ENCODE measurements at regions of chr17 and their contacts with region 1.

Region 1: GRCh38 chr17:76467366-76467765 is at the start of gene AANAT:
- DNase-seq: no peak
- H3K4me3 Mint-ChIP-seq: no peak within 1 kb of the TSS
- H3K27ac Mint-ChIP-seq: no peak within 1 kb of the TSS
- H3K4me1 Mint-ChIP-seq: peaks cover 4% of the 10 kb centered on the region
- H3K27me3 Mint-ChIP-seq: no peaks in the 10 kb centered on the region
- total RNA-seq, gene AANAT: not detected

Region 2: DNA sequence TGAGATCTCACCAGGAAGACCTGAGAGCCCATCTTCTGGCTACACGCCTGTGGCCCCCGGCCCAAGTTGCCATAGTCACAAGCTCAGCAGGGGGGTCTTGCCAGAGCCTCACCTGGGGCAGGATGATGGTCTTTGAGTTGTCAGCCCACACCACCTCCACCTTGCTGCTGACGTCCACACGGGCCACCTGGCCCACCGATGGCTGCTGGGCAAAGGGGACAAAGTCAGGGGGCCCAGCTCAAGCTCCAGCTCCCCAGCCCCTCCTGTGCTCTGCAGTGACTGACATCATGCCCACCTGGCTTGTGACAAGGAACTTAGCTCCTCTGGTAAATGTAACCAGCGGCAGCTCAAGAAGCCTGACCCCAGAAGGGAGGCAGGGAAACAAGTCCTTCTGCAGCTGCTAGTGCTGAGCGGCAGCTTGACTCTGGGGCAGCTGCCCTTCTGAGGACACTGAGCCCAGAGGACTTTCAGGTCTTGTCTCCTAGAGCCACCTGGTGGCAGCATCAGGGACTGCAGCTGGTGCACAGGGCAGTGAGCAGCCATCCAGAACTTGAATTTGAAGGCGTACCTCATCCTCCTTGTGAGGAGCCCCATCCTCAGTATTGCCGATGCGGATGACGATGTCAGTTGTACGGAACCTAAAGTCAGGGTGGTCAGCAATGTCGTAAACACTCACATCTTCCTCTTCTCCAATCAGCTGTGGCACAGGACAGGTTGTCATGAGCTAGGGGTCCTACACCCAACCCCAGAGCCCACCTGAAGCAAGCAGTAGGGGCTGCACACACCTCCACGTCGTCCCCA is 69.5 kb before region 1 on chr17:
- CTCF ChIA-PET with region 1: no interaction called
- POLR2A ChIA-PET with region 1: no interaction called
- intact Hi-C with region 1: no loop called
- DNase-seq: peak; percentile 90
- H3K4me3 Mint-ChIP-seq: no peak overlapping the region
- H3K27ac Mint-ChIP-seq: no peak overlapping the region
- H3K4me1 Mint-ChIP-seq: no peaks in the 10 kb centered on the region
- H3K27me3 Mint-ChIP-seq: no peaks in the 10 kb centered on the region

Region 3: GRCh38 chr17:76492989-76493501 is 25.7 kb after region 1 on chr17:
- CTCF ChIA-PET with region 1: interaction called, 13 read pairs
- POLR2A ChIA-PET with region 1: interaction called, 4 read pairs
- intact Hi-C with region 1: no loop called
- DNase-seq: peak; percentile 83
- H3K4me3 Mint-ChIP-seq: peak overlapping the region; percentile 35
- H3K27ac Mint-ChIP-seq: peak overlapping the region; percentile 79
- H3K4me1 Mint-ChIP-seq: peaks cover 42% of the 10 kb centered on the region
- H3K27me3 Mint-ChIP-seq: no peaks in the 10 kb centered on the region

Region 4: GRCh38 chr17:76501018-76501826 is 33.9 kb after region 1 on chr17 and contains the start of gene RHBDF2:
- CTCF ChIA-PET with region 1: interaction called, 95 read pairs
- POLR2A ChIA-PET with region 1: no interaction called
- intact Hi-C with region 1: loop called (anchors 1 kb)
- DNase-seq: peak; percentile 98
- H3K4me3 Mint-ChIP-seq: peak within 1 kb of the TSS; percentile 86
- H3K27ac Mint-ChIP-seq: peak within 1 kb of the TSS; percentile 85
- H3K4me1 Mint-ChIP-seq: peaks cover 45% of the 10 kb centered on the region
- H3K27me3 Mint-ChIP-seq: no peaks in the 10 kb centered on the region
- total RNA-seq, gene RHBDF2: 28.9 to 30.0 TPM